Posterior cingulate gyrus (tissue), 11 donors: ENCODE measurements at regions of chr1 and their contacts with region 1.

Region 1: DNA sequence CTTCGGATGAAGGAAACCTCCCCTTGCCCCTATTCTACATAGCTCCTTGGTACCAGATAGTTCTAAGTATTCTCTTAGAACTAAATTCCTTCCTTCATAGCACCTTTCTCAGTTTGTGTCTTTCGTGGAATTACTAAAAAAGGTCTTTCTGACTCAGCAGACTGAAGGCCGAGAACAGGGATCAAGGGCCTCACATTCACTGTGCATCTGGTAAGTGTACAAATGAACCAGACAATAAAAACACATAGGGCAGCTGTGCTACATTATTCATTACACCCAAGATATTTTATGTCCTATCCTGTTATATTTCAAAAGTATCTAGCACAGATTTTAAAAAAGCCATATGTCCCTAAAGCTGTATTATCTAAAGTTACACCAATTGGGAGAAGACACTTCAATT is 62.9 kb upstream of the HP1BP3 start:
- DNase-seq: no peak

Region 2: GRCh38 chr1:20753589-20753988 is 96.4 kb before region 1 on chr1:
- intact Hi-C with region 1: loop called (anchors 10 kb)
- DNase-seq: no peak

Region 3: DNA sequence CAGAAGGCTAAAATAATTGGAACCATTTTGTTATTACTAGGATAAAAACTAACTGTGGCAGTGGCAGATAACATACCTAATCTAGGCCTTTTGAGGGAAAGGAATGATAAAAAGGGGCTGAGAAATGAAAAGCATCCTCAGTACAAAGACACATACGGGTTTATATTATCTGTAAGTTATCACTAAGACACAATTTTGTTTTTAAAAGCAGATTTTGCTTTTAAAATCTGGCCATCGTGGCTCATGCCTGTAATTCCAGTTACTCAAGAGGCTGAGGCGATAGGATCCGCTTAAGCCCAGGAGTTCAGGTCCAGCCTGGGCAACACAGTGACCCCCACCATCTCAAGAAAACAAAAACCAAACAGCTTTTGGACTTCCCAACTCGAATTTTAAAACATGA is 38.1 kb before region 1 on chr1:
- intact Hi-C with region 1: no loop called
- DNase-seq: no peak